Sciatic nerve (tissue), 2 donors: ENCODE measurements at regions of chr7 and their contacts with region 1.

Region 1: DNA sequence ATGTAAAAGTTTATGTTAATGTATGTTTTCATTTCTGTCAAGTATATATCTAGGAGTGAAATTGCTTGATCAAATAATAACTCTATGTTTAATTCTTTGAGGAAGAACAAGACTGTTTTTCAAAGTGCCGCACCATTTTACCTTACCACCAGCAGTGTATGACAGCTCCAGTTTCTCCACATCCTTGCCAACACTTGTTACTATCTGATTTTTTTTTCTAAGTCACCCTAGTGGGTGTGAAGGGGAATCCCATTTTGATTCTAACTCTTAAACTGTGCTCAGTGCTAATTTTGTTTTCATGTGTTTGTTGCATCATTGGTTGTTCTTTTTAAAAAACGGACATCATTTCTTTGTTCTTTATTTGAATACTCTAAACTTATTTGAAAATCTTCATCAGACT is 120.2 kb upstream of the CDK6 start:
- DNase-seq: no peak
- ATAC-seq: no peak

Region 2: GRCh38 chr7:92933810-92934449 is 22.6 kb before region 1 on chr7:
- intact Hi-C with region 1: loop called (anchors 1 kb)
- DNase-seq: no peak
- ATAC-seq: no peak

Region 3: GRCh38 chr7:93097388-93097787 is 140.8 kb after region 1 on chr7:
- intact Hi-C with region 1: no loop called
- DNase-seq: no peak
- ATAC-seq: no peak